ENCODE measurements at regions of chr11 and their contacts with region 1.

Region 1: GRCh38 chr11:14907411-14908213 is 15.6 kb upstream of the CYP2R1 start:
- DNase-seq: peak; percentile 70
- H3K4me3 Mint-ChIP-seq: peak overlapping the region; percentile 43
- H3K27ac Mint-ChIP-seq: no peak overlapping the region
- H3K4me1 Mint-ChIP-seq: peaks cover 16% of the 10 kb centered on the region
- H3K27me3 Mint-ChIP-seq: peaks cover 22% of the 10 kb centered on the region
- CTCF ChIP-seq: peak; percentile 90

Region 2: DNA sequence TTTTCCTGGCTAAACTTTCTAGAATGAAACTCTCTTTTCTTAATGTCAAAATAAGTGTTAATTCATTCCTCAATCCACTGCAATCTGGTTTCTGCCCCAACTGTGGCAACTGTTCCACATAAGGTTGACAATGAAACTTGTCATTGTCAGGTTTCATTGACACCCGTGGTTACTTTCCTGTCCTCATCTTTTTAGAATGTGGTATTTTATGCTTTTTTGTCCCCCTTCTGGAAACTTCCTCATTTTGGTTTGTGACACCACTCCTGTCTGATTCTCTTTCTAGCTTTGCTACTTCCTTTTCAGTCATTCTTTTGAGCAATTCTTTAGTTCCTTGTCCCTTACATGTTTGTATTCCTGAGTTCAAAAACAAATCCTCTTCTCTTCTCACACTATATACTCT is 271.5 kb before region 1 on chr11:
- CTCF ChIA-PET with region 1: no interaction called
- POLR2A ChIA-PET with region 1: no interaction called
- intact Hi-C with region 1: no loop called
- DNase-seq: no peak
- H3K4me3 Mint-ChIP-seq: no peak overlapping the region
- H3K27ac Mint-ChIP-seq: no peak overlapping the region
- H3K4me1 Mint-ChIP-seq: no peaks in the 10 kb centered on the region
- H3K27me3 Mint-ChIP-seq: peaks cover 82% of the 10 kb centered on the region
- CTCF ChIP-seq: no peak

Region 3: DNA sequence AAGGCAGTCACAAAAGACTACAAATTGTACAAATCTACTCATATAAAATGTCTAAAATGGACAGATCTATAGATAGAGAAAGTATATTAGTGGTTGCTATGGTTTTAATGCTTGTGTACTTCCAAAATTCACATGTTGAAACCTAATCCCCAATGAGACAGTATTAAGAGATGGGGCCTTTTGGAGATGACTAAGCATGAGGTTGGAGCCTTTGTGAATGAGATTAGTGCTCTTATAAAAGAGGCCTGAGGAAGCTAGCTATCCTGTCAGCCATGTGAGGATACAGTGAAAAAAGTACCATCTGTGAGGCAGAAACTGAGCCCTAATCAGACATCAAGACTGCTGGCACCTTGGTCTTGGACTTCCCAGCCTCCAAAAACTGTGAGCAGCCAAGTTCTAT is 98.1 kb before region 1 on chr11:
- CTCF ChIA-PET with region 1: interaction called, 19 read pairs
- POLR2A ChIA-PET with region 1: no interaction called
- intact Hi-C with region 1: no loop called
- DNase-seq: no peak
- H3K4me3 Mint-ChIP-seq: no peak overlapping the region
- H3K27ac Mint-ChIP-seq: no peak overlapping the region
- H3K4me1 Mint-ChIP-seq: no peaks in the 10 kb centered on the region
- H3K27me3 Mint-ChIP-seq: no peaks in the 10 kb centered on the region
- CTCF ChIP-seq: no peak

Region 4: DNA sequence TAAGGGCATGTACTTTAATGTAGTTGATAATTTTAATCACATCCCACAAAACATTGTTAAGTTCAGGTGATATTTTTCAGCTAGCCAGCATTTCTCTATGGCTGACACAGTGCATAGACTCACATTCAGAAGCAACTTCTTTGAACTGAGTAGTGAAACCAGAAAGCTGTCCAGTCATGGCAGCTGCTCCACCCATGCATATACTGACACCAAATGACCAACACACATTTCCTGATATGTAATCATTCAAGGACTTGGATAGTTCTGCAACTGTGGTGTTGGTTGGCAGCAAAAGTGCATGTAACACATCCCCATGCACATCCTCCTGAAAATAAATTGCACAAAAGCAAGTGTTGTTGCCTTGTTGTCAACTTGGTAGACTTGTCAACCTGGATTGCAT is 24.8 kb after region 1 on chr11:
- CTCF ChIA-PET with region 1: interaction called, 32 read pairs
- POLR2A ChIA-PET with region 1: interaction called, 3 read pairs
- intact Hi-C with region 1: no loop called
- DNase-seq: no peak
- H3K4me3 Mint-ChIP-seq: no peak overlapping the region
- H3K27ac Mint-ChIP-seq: no peak overlapping the region
- H3K4me1 Mint-ChIP-seq: peaks cover 8% of the 10 kb centered on the region
- H3K27me3 Mint-ChIP-seq: peaks cover 9% of the 10 kb centered on the region
- CTCF ChIP-seq: no peak

Region 5: GRCh38 chr11:15006139-15006759 is 98.6 kb after region 1 on chr11:
- CTCF ChIA-PET with region 1: interaction called, 41 read pairs
- POLR2A ChIA-PET with region 1: interaction called, 3 read pairs
- intact Hi-C with region 1: loop called (anchors 1 kb)
- DNase-seq: peak; percentile 57
- H3K4me3 Mint-ChIP-seq: no peak overlapping the region
- H3K27ac Mint-ChIP-seq: no peak overlapping the region
- H3K4me1 Mint-ChIP-seq: no peaks in the 10 kb centered on the region
- H3K27me3 Mint-ChIP-seq: peaks cover 62% of the 10 kb centered on the region
- CTCF ChIP-seq: peak; percentile 50

Region 6: GRCh38 chr11:15074206-15075161 is 166.9 kb after region 1 on chr11:
- CTCF ChIA-PET with region 1: interaction called, 292 read pairs
- POLR2A ChIA-PET with region 1: interaction called, 16 read pairs
- intact Hi-C with region 1: loop called (anchors 1 kb)
- DNase-seq: peak; percentile 87
- H3K4me3 Mint-ChIP-seq: peak overlapping the region; percentile 4
- H3K27ac Mint-ChIP-seq: no peak overlapping the region
- H3K4me1 Mint-ChIP-seq: peaks cover 6% of the 10 kb centered on the region
- H3K27me3 Mint-ChIP-seq: no peaks in the 10 kb centered on the region
- CTCF ChIP-seq: peak; percentile 84

Region 7: DNA sequence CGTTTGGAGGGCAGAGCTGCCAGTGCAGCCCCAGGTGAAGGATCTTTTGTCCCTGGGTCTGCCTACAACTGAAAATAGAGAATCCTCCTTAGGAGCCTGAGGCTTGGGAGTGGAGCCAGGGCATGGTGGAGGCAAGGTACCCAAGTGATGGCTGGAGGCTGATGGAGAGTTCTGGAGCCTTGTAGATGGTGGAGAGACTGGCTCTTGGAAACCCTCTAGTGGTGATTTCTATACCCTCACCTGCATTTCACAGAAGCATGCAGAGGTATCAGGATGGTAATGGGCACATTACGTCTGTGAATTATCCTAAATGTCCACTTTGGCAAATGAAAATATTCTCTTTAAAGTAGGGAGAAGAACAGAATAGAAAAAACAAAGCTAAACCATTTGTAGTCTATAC is 251.5 kb after region 1 on chr11:
- CTCF ChIA-PET with region 1: interaction called, 10 read pairs
- POLR2A ChIA-PET with region 1: no interaction called
- intact Hi-C with region 1: loop called (anchors 1 kb)
- DNase-seq: peak; percentile 62
- H3K4me3 Mint-ChIP-seq: no peak overlapping the region
- H3K27ac Mint-ChIP-seq: no peak overlapping the region
- H3K4me1 Mint-ChIP-seq: peaks cover 22% of the 10 kb centered on the region
- H3K27me3 Mint-ChIP-seq: no peaks in the 10 kb centered on the region
- CTCF ChIP-seq: peak; percentile 79

Region 8: GRCh38 chr11:15258433-15259165 is 351.0 kb after region 1 on chr11:
- CTCF ChIA-PET with region 1: interaction called, 11 read pairs
- POLR2A ChIA-PET with region 1: interaction called, 4 read pairs
- intact Hi-C with region 1: no loop called
- DNase-seq: peak; percentile 51
- H3K4me3 Mint-ChIP-seq: no peak overlapping the region
- H3K27ac Mint-ChIP-seq: no peak overlapping the region
- H3K4me1 Mint-ChIP-seq: no peaks in the 10 kb centered on the region
- H3K27me3 Mint-ChIP-seq: no peaks in the 10 kb centered on the region
- CTCF ChIP-seq: peak; percentile 23

Measured in MCF 10A (cell line).